Activated B cell treated with CpG ODN at 0.5 μM for 24 hours (primary cell): ENCODE measurements at regions of chr2 and their contacts with region 1.

Region 1: GRCh38 chr2:43484323-43484930 is 111.4 kb downstream of the THADA start:
- DNase-seq: no peak
- ATAC-seq: no peak
- H3K4me3 Mint-ChIP-seq: no peak overlapping the region
- H3K27ac Mint-ChIP-seq: no peak overlapping the region
- H3K4me1 Mint-ChIP-seq: peaks cover 29% of the 10 kb centered on the region
- H3K27me3 Mint-ChIP-seq: no peaks in the 10 kb centered on the region
- CTCF ChIP-seq: peak; percentile 45

Region 2: DNA sequence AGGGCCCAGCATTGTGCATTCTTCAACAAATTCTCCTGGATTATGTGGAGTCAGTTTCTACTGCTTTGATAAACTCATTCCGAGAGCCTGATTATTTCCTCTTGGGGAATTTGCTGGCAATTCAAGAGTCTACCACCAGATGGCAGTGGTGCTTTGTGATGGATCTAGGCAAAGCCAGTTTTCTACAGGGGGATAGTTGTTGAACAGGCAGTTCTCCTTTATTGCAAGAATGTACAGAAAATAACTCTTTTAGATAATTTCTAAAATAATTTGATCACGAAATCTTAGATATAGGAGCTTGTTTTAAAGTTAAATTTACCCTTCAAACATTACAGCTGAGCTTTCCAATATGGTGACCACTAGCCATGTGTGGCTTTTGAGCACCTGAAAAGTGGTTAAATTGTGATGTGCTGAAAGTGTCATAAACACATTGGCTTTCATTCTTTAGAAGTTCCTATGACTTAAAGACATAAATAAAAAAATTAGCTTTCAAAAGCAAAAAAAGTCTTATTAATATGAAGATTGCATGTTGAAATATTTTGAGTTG is 625.3 kb before region 1 on chr2:
- CTCF ChIA-PET with region 1: interaction called, 9 read pairs
- POLR2A ChIA-PET with region 1: no interaction called
- intact Hi-C with region 1: loop called (anchors 1 kb)
- DNase-seq: no peak
- ATAC-seq: no peak
- H3K4me3 Mint-ChIP-seq: no peak overlapping the region
- H3K27ac Mint-ChIP-seq: no peak overlapping the region
- H3K4me1 Mint-ChIP-seq: no peaks in the 10 kb centered on the region
- H3K27me3 Mint-ChIP-seq: no peaks in the 10 kb centered on the region
- CTCF ChIP-seq: peak; percentile 42

Region 3: GRCh38 chr2:42974721-42975717 is 509.4 kb before region 1 on chr2:
- CTCF ChIA-PET with region 1: interaction called, 54 read pairs
- POLR2A ChIA-PET with region 1: interaction called, 8 read pairs
- intact Hi-C with region 1: loop called (anchors 1 kb)
- DNase-seq: peak; percentile 54
- ATAC-seq: peak; percentile 76
- H3K4me3 Mint-ChIP-seq: no peak overlapping the region
- H3K27ac Mint-ChIP-seq: no peak overlapping the region
- H3K4me1 Mint-ChIP-seq: peaks cover 35% of the 10 kb centered on the region
- H3K27me3 Mint-ChIP-seq: peaks cover 3% of the 10 kb centered on the region
- CTCF ChIP-seq: no peak

Region 4: DNA sequence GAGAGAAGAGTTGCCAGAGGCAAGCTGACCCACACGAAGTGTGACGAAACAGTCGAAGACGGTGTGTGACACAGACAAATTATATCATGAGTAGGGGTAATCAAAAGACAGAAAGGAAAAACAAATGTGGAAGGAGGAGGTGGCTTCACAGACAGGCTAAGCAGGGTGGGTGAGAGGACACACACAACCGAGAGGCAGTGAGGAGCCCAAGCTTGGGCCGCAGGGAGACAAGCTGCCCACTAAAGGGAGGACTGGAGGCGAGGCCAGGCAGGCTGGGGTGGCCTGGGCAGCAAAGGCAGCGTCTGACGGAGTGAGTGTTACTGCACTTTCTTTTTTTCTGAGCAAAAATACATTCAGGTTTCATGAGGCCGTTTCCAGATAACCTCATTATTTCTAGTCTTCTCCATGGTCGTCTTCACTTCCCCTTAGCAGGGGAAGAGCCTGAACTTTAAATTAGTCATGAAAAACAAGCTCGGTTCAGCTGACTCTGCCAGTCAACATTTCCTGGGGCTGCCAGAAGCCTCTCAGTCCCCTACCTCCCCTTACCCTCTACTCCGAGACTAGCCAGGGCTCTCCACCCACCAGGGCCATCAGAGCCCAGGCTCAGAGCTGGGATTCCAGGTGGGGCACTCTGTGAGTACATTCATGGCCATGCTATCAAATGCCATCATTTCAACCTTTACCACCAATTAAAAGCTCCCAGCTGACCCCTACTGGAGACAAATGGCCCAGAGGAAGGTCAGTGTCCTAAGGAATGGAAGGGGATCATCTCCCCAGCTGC is 244.3 kb before region 1 on chr2:
- CTCF ChIA-PET with region 1: interaction called, 10 read pairs
- POLR2A ChIA-PET with region 1: no interaction called
- intact Hi-C with region 1: no loop called
- DNase-seq: no peak
- ATAC-seq: peak; percentile 80
- H3K4me3 Mint-ChIP-seq: peak overlapping the region; percentile 56
- H3K27ac Mint-ChIP-seq: peak overlapping the region; percentile 91
- H3K4me1 Mint-ChIP-seq: peaks cover 40% of the 10 kb centered on the region
- H3K27me3 Mint-ChIP-seq: no peaks in the 10 kb centered on the region
- CTCF ChIP-seq: no peak